BJ (cell line): ENCODE measurements at regions of chr1 and their contacts with region 1.

Region 1: DNA sequence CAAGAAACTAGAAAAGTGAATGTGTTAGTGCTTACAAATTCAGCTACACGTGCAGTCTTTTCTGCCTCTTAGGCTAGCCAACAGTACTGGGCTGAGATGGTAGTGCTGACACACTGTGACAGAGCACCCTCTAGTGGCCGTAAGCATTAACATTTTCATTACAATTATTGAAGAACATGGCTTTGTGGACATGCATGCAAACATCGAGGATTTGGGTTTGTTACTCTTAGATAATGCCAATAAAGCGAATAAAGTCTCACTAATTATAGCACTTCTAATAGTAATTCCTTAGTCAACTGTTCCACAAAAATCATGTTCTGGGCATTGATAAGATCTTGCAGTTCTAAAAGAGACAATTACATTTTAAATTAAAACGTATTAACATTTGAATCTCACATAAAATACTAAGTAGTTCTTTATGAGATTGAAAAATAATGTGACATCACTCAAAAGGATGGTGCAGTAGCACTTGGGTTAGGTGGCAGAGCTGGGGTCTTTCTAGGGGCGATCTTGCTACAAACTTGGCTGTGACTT is 47.1 kb downstream of the MYSM1 start:
- DNase-seq: peak; percentile 29
- H3K4me3 ChIP-seq: no peak overlapping the region
- H3K27me3 ChIP-seq: no peaks in the 10 kb centered on the region
- CTCF ChIP-seq: peak; percentile 73

Region 2: DNA sequence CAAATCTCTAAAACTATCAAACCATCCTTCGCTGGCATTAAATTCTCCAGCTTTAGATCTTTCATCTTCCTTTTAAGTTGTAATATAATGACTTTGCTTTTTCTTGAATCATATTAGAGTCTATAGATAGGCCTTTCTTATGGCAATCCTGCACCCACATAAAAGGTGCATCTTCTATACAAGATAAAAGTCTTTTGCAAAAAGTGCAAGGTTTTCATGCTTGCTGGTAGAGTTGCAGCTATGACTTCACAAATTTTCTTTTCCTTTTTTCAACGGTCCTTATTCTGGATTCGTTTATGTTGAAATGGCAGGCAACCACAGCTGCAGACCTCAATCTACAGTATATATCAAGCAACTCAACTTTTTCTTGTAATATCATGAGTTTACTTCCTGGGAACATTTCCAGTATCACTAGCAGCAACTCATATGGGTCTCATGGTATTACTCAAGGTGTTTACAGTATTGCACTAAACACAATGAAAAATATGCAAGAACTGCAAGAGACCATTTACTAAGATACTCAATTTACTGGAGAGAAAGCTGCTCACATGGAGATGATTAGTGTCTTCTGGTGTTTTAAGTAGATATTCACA is 128.3 kb before region 1 on chr1:
- CTCF ChIA-PET with region 1: interaction called, 67 read pairs
- POLR2A ChIA-PET with region 1: no interaction called
- DNase-seq: peak; percentile 15
- H3K4me3 ChIP-seq: no peak overlapping the region
- H3K27me3 ChIP-seq: no peaks in the 10 kb centered on the region
- CTCF ChIP-seq: no peak

Region 3: GRCh38 chr1:58664881-58665280 is 12.2 kb after region 1 on chr1:
- CTCF ChIA-PET with region 1: interaction called, 11 read pairs
- POLR2A ChIA-PET with region 1: no interaction called
- DNase-seq: no peak
- H3K4me3 ChIP-seq: no peak overlapping the region
- H3K27me3 ChIP-seq: no peaks in the 10 kb centered on the region
- CTCF ChIP-seq: no peak